ENCODE measurements at regions of chr2 and their contacts with region 1.

Region 1: GRCh38 chr2:88654714-88655113 is 27.4 kb upstream of the EIF2AK3 start:
- DNase-seq: peak; percentile 41
- H3K4me3 ChIP-seq: no peak overlapping the region
- H3K27ac ChIP-seq: no peak overlapping the region
- H3K4me1 ChIP-seq: peaks cover 13% of the 10 kb centered on the region
- H3K27me3 ChIP-seq: no peaks in the 10 kb centered on the region
- CTCF ChIP-seq: no peak

Region 2: GRCh38 chr2:88600038-88600465 is 54.7 kb before region 1 on chr2:
- CTCF ChIA-PET with region 1: no interaction called
- dilution Hi-C with region 1: loop called (anchors 5 kb)
- in situ Hi-C with region 1: no loop called
- intact Hi-C with region 1: no loop called
- DNase-seq: peak; percentile 98
- H3K4me3 ChIP-seq: no peak overlapping the region
- H3K27ac ChIP-seq: peak overlapping the region; percentile 72
- H3K4me1 ChIP-seq: peaks cover 19% of the 10 kb centered on the region
- H3K27me3 ChIP-seq: no peaks in the 10 kb centered on the region
- CTCF ChIP-seq: no peak

Measured in mammary epithelial cell (primary cell).